ENCODE measurements at regions of chr14 and their contacts with region 1.

Region 1: DNA sequence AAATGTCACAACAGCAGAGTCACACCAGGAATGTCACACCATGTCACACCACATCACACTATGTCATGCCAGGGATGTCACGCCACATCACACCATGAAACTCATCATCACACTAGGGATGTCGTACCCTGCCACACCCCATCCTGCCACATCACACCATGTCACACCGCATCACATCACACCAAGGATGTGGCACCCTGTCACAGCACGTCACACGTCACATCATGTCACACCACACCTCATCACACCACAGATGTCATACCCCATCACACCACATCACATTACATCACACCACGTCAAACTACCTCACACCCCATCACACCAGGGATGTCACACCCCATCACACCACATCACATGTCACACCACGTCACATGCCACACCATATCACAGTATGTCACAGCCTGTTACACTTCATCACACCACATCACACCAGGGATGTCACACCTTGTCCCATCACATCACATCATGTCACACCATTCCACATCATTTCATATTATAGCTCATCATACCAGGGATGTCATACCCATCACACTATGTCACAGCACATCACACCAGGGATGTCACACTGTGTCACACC is 90.9 kb downstream of the TMEM121 start:
- DNase-seq: no peak
- H3K4me3 ChIP-seq: no peak overlapping the region
- H3K27ac ChIP-seq: no peak overlapping the region
- H3K4me1 ChIP-seq: no peaks in the 10 kb centered on the region
- H3K27me3 ChIP-seq: peaks cover 5% of the 10 kb centered on the region
- CTCF ChIP-seq: no peak
- POLR2A ChIP-seq: no peak

Region 2: DNA sequence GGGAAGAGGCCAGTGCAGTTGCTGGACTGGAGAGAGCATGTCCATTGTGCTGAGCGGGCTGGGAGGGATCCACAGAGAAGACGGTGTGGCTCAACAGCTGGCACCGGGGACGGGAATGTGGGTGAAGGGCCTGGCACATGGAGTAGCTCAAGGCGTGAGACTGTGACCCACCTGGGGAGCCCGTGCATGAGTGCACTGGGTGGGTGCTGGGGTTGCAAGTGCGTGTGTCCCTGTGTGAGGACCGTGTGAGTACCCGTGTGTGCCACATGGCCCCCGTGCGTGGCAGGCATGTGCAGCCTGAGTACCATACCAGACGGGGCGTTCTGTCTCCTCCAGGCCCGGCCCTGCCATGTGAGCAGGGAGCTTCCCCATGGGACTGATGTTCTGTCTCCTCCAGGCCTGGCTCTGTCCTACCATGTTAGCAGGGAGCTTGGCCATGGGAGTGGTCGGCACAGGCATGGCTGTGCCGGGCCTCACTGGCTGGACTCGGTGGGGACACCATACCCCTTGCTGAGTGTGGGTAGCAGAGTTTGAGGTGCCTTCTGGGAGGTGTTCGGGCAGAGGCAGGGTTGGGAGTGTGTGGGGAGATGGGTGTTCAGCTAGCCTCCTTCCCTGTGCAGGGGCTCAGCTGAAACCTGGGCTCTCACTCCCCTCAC is 143.5 kb after region 1 on chr14:
- intact Hi-C with region 1: loop called (anchors 2 to 5 kb)
- DNase-seq: peak in 1 of 7 donors; percentile 14
- H3K4me3 ChIP-seq: no peak overlapping the region
- H3K27ac ChIP-seq: no peak overlapping the region
- H3K4me1 ChIP-seq: no peaks in the 10 kb centered on the region
- H3K27me3 ChIP-seq: no peaks in the 10 kb centered on the region
- CTCF ChIP-seq: no peak
- POLR2A ChIP-seq: no peak